Colonic mucosa (tissue), 4 donors: ENCODE measurements at regions of chr14 and their contacts with region 1.

Region 1: DNA sequence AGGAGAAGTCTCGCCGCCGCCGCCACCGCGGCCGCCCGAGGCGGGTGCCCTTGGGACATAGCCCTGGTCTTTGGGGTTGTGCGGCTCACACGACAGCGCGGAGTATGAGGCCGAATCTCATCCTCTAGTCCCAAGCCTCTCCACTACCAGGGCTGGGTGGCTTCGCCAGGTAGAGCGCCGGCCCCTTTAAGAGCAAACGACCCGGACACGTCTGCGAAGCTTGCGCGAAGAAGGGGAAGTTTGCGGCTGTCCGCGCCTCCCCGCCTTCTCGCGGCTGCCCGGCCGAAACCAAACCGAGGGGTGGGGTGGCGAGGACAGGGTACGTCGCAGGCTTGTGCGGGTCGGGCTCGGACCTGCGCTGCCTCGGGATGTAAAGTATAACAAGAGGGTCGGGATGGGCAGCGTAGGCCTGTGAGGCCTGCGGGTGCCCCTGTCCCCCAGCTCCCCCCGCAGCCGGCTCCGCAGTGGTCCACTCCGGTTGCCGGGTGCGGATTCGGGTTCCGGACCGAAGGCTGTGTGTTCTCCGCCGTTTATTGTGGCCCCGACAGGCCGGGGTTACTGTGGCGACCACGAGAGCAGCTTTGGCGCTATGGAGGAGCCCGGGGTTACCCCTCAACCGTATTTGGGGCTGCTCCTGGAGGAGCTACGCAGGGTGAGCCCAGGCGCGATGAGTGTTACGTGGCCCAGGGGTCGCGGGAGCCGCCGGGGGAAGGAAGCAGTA is 33.3 kb downstream of the MIA2 start:
- DNase-seq: peak; percentile 89
- H3K4me3 ChIP-seq: peak overlapping the region; percentile 70
- H3K27ac ChIP-seq: peak overlapping the region; percentile 92
- H3K4me1 ChIP-seq: no peaks in the 10 kb centered on the region
- H3K27me3 ChIP-seq: no peaks in the 10 kb centered on the region
- CTCF ChIP-seq: no peak

Region 2: GRCh38 chr14:38391334-38391733 is 875.7 kb before region 1 on chr14:
- intact Hi-C with region 1: no loop called
- DNase-seq: no peak
- H3K4me3 ChIP-seq: no peak overlapping the region
- H3K27ac ChIP-seq: no peak overlapping the region
- H3K4me1 ChIP-seq: no peaks in the 10 kb centered on the region
- H3K27me3 ChIP-seq: no peaks in the 10 kb centered on the region
- CTCF ChIP-seq: no peak

Region 3: DNA sequence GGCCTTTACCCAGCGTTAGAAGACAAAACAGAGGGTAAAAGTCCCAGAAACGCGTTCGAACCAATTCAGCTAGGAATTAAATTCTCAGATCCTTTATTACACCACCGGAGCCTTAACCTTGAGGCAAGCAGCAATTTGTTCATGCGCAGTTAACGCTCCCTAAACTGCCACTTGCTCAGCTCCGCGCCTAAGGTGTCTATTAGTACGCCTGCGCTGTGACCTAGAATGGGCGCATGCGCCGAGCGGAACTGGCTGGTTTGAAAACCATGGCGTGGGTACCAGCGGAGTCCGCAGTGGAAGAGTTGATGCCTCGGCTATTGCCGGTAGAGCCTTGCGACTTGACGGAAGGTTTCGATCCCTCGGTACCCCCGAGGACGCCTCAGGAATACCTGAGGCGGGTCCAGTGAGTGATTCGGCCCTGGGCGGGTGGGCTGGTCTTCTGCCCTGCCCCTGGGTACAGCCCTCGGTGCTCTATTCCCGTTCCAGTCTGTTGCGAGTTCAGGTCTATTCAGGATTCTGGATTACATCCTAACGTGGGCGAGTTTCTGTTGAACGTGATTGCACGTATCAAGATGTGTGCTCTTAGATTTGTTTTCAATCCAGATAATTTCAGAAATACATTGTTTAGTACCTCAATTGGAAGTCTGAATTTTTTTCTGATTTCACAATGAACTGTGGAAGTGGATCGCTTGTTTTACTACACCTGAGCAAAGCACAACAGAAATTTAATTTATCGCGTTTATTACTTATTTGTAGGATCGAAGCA is 152.8 kb before region 1 on chr14 and contains the start of gene GEMIN2:
- intact Hi-C with region 1: no loop called
- DNase-seq: peak; percentile 96
- H3K4me3 ChIP-seq: peak within 1 kb of the TSS; percentile 68
- H3K27ac ChIP-seq: peak within 1 kb of the TSS; percentile 71
- H3K4me1 ChIP-seq: peaks cover 4% of the 10 kb centered on the region
- H3K27me3 ChIP-seq: no peaks in the 10 kb centered on the region
- CTCF ChIP-seq: no peak
- total RNA-seq, gene GEMIN2: 8.2 to 13.3 TPM

Region 4: DNA sequence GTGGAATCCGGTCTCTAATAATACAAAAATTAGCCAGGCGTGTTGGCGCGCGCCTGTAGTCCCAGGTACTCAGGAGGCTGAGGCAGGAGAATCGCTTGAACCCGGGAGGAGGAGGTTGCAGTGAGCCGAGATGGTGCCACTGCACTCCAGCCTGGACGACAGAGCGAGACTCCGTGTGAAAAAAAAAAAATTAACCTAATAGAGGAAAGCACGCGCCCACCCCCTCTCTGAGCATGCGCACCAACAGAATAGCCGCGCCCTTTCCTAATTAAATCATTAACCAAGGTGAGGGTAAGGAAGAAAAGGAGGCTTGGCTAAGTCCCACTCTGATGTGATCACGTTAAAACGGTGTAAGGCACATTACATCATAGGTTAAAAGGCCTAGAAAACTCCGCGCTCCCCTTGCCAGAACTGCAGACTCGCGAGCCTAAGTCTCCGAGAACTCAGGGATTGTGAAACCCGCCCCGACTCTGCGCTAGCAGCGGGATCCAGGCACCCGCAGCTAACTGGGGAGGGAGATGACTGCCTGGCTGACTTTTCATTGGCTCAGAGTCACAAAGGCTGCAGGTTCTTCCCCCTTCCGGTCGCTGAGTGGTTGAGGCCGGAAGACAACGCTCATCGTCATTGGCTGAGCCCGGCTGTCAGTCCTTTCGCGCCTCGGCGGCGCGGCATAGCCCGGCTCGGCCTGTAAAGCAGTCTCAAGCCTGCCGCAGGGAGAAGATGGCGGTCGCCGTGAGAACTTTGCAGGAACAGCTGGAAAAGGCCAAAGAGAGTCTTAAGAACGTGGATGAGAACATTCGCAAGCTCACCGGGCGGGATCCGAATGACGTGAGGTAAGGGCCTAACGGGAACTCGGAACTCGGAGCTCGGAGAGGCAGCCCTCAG is 92.2 kb before region 1 on chr14 and contains the start of gene PNN:
- intact Hi-C with region 1: loop called (anchors 5 kb)
- DNase-seq: peak; percentile 98
- H3K4me3 ChIP-seq: peak within 1 kb of the TSS; percentile 79
- H3K27ac ChIP-seq: peak within 1 kb of the TSS; percentile 92
- H3K4me1 ChIP-seq: no peaks in the 10 kb centered on the region
- H3K27me3 ChIP-seq: no peaks in the 10 kb centered on the region
- CTCF ChIP-seq: no peak
- total RNA-seq, gene PNN: 34.6 to 52.4 TPM

Region 5: DNA sequence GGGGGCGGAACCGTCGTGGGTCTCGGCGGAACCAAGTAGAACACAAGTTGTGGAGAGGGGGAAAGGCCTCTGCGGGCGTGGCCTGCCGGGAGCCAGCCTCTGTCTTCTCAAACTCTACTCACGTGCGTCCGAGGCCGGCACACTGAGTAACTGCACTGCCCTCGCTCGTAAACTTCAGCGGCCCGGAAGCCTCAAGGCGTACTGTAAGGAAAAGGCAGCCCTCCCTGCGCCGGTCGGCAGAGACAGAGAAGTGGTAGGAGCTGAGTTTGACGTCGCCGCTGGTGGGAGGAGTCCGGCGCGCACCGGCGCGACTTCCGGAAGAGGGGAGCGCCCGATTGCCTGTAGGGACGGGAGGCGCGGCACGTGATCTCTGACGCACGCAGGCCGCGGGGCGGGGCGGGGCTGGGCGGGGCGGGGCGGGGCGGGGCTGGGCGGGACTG is 165.2 kb after region 1 on chr14 and contains the start of gene FBXO33:
- intact Hi-C with region 1: loop called (anchors 5 kb)
- DNase-seq: peak; percentile 96
- H3K4me3 ChIP-seq: peak within 1 kb of the TSS; percentile 96
- H3K27ac ChIP-seq: peak within 1 kb of the TSS; percentile 96
- H3K4me1 ChIP-seq: no peaks in the 10 kb centered on the region
- H3K27me3 ChIP-seq: no peaks in the 10 kb centered on the region
- CTCF ChIP-seq: no peak
- total RNA-seq, gene FBXO33: 10.6 to 11.1 TPM

Region 6: DNA sequence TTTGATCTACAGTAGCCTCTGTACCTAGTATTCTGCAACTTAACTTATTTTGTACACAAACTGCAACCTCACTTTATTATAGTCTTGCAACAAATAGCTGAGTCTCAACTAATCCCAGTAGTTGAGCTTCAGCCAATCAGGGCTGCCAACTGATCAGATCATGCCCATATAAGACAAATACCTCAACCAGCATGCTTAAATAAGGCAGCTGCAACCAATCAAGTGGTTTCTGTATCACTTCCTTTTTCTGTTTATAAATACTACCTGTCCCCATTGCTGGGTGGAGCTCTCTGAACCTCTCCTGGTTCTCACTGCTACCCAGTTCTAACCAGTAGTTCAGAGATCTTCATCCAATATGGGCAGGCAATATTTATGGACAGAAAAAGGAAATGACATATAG is 413.7 kb after region 1 on chr14:
- intact Hi-C with region 1: no loop called
- DNase-seq: no peak
- H3K4me3 ChIP-seq: no peak overlapping the region
- H3K27ac ChIP-seq: no peak overlapping the region
- H3K4me1 ChIP-seq: no peaks in the 10 kb centered on the region
- H3K27me3 ChIP-seq: no peaks in the 10 kb centered on the region
- CTCF ChIP-seq: no peak